Stomach (tissue), 19 donors: ENCODE measurements at regions of chr9 and their contacts with region 1.

Region 1: GRCh38 chr9:69131682-69132081 is 42.4 kb upstream of the TJP2 start:
- DNase-seq: peak in 1 of 2 donors; percentile 75
- H3K4me3 ChIP-seq: no peak overlapping the region
- H3K27ac ChIP-seq: peak overlapping the region in 3 of 5 donors; percentile 20 to 45 (median 38)
- H3K4me1 ChIP-seq: peaks cover 27 to 58% (median 32%) of the 10 kb centered on the region in 4 donors
- H3K27me3 ChIP-seq: no peaks in the 10 kb centered on the region
- CTCF ChIP-seq: no peak
- EP300 ChIP-seq: no peak
- POLR2A ChIP-seq: no peak

Region 2: DNA sequence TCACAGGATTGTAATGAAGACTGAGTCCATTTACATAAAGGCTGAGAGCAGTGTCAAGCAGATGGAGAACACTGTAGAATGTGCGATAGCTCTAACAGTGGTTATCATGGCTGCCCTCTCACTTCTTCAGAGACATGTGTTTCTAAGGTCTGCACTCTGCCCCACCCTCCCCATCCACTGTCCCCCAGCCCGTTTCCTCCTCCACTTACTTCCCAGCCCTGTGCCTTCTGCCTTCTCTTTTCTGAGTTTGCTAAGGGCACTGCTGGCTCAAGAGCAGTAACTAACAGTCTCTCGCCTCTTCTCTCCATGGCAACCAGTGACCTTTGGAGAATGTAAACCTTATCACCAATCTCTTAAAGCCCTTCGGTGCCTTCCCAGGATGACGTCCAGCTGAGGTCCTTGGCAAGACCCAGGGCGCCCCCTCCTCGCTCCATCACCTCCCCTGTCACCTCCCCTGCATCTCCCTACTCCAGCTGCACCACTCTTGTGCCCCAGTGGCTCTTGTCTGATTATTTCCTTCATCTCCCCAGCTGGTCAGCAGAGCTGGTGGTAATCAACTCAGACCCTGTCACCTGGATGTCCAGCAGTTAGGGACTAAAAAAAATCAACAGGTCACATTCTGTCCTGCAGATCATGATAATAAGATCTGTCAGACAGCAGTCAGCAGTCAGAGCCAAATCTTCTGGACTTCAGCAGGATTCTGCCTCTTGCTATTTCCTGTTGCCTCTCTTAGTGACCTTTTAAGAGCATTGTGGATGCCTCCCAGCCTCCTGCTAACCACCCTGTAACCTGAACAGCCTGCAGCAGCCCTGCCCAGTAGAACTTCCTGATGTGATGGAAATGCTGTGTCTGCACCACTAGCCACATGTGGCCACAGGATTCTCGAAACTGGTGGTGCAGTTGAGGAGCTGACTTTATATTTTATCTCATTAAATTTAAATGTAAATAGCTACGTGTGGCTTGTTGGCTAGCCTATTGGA is 87.2 kb before region 1 on chr9:
- intact Hi-C with region 1: loop called (anchors 10 kb)
- DNase-seq: peak in 1 of 2 donors; percentile 30
- H3K4me3 ChIP-seq: no peak overlapping the region
- H3K27ac ChIP-seq: no peak overlapping the region
- H3K4me1 ChIP-seq: peaks cover 6 to 21% (median 14%) of the 10 kb centered on the region in 4 donors
- H3K27me3 ChIP-seq: no peaks in the 10 kb centered on the region
- CTCF ChIP-seq: no peak
- EP300 ChIP-seq: no peak
- POLR2A ChIP-seq: no peak

Region 3: DNA sequence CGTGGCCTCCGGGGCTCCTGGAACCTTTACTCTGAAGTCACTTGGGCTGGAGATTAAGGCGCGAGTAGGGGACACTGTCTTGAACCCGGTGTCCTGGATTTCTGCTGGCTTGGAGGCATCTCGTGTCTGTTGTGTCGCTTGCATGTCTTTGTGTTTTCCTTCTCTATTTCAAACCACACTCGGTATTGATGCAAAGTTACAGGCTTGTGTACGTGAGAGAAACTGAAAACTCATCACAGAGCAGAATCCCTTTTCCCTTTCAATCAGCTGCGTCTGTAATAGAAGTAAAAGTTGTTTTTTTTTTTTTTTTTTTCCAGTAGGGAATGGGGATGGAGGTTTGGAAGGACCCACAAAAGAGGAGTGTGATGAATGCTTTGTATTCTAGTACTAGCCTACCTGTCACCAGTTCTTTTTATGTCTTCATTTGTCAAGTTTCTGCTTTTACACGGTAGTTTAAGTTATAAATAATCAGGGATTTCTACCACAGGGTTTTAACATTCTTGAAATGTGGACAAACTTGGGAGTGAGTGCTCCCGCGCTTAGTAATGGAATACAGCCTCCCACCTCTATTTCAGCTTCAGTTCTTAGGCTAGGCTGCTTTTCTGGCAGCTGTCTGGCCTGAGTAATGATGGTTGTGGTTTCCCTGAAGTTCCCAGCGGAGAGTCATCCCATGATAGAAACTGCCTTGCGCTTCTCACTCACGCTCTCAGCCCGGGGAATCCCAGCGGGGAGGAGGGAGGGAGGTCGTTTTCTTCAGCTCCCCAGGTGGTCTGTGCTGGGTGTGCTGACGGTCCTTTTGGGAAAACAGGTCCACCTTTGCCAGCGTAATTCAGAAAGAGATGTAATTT is 43.2 kb after region 1 on chr9:
- intact Hi-C with region 1: loop called (anchors 5 kb)
- DNase-seq: peak in 1 of 2 donors; percentile 76
- H3K4me3 ChIP-seq: peak overlapping the region; percentile 62 to 71 (median 66)
- H3K27ac ChIP-seq: peak overlapping the region; percentile 22 to 83 (median 74)
- H3K4me1 ChIP-seq: peaks cover 36 to 90% (median 61%) of the 10 kb centered on the region in 4 donors
- H3K27me3 ChIP-seq: peaks cover 0 to 7% (median 0%) of the 10 kb centered on the region in 3 donors
- CTCF ChIP-seq: no peak
- EP300 ChIP-seq: no peak
- POLR2A ChIP-seq: no peak